Mucosa of descending colon (tissue), 3 donors: ENCODE measurements at regions of chrX and their contacts with region 1.

Region 1: DNA sequence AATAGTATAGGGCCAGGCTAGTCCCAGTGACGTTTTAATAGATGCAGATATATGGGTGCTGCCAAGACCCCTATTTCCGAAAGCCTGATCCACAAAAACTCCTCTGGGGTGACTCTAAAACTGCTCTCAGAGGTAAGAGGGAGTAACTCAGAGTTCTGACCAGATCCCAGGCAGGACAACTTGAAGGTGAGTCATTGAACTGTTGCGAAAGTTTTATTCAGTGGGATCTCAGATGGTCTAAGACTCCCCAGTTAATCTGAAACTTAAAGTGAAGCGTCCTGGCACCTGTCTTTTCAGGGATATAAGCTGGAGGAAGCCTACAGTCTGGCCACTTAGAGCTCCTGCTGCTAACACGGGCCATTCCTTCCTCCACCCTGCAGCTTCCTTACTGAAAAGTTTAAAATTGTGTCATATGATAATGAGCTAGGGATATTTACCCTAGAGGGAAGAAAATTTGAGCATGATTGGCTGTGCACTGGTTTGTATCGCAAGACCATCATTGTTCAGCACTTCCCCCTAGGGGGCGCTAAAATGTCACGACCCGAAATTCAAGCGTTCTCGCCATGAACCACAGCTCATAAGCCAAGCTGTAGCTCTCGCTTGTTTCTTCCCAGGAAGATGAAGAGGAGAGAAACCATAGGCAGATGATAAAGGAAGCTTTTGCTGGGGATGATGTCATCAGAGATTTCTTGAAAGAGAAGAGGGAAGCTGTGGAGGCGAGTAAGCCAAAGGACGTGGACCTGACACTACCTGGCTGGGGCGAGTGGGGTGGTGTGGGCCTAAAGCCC is 19.5 kb downstream of the UTP14A start:
- DNase-seq: peak in 2 of 3 donors; percentile 58 to 77
- ATAC-seq: peak; percentile 87
- H3K4me3 ChIP-seq: no peak overlapping the region
- H3K4me1 ChIP-seq: no peaks in the 10 kb centered on the region
- CTCF ChIP-seq: peak; percentile 38

Region 2: GRCh38 chrX:130055103-130055502 is 129.6 kb after region 1 on chrX:
- intact Hi-C with region 1: loop called in 1 of 2 experiments (anchors 5 kb)
- DNase-seq: no peak
- ATAC-seq: no peak
- H3K4me3 ChIP-seq: no peak overlapping the region
- H3K4me1 ChIP-seq: no peaks in the 10 kb centered on the region
- CTCF ChIP-seq: no peak

Region 3: GRCh38 chrX:130165703-130166502 is 240.4 kb after region 1 on chrX and contains the start of gene AIFM1:
- intact Hi-C with region 1: no loop called
- DNase-seq: peak; percentile 87 to 95 (median 92)
- ATAC-seq: peak; percentile 96
- H3K4me3 ChIP-seq: peak within 1 kb of the TSS; percentile 14
- H3K4me1 ChIP-seq: peaks cover 2% of the 10 kb centered on the region
- CTCF ChIP-seq: no peak
- total RNA-seq, gene AIFM1: 45.3 to 66.9 (median 50.0) TPM